IMR-90 (cell line): ENCODE measurements at regions of chr3 and their contacts with region 1.

Region 1: DNA sequence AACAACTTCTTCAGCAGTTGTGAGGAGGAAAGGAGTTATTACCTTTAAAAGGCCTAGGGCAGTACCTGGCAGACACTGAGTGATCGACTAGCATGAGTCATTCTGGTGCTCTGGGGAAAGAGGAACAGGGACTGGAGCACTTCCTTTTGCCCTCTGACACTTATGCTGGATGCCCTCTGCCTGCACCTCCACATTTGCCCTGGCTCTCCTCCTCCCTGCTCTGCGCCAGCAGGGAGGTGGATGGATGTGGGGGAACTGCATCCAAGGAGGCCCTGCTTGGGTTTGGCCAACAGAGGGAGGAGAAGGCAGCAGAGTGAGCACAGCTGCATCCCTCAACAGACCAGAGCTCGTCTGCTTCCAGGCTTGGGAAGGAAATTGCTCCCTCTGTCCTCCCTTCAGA is 75.1 kb downstream of the SEMA5B start:
- DNase-seq: no peak
- ATAC-seq: no peak
- H3K4me3 ChIP-seq: no peak overlapping the region
- H3K27ac ChIP-seq: no peak overlapping the region
- H3K4me1 ChIP-seq: peaks cover 1% of the 10 kb centered on the region; the same call in 1 of the 2 replicates
- H3K27me3 ChIP-seq: peaks cover 34% of the 10 kb centered on the region
- CTCF ChIP-seq: no peak
- POLR2A ChIP-seq: no peak
- RAD21 ChIP-seq: no peak

Region 2: DNA sequence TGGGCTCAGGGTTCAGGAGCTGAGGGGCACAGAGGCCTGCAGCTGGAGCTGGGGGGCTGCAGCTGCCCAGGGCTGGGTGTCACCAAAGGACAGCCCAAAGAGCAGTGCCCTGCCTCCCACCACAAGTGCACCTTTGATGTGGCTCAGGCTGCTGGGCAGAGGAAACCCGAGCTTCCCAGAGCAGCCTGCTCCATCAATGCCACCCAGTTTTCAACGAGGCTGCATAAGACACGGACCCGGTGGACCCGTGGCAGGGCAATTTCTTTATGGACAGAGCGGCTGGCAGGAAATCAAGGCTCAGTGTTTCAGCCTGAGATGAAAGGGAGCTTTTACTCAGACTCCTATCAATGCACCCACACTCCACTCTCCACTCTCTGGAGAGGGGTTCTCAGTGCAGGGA is 56.3 kb after region 1 on chr3:
- CTCF ChIA-PET with region 1: no interaction called
- POLR2A ChIA-PET with region 1: no interaction called
- dilution Hi-C with region 1: no loop called
- in situ Hi-C with region 1: no loop called
- intact Hi-C with region 1: loop called (anchors 5 kb)
- DNase-seq: no peak
- ATAC-seq: no peak
- H3K4me3 ChIP-seq: no peak overlapping the region
- H3K27ac ChIP-seq: no peak overlapping the region
- H3K4me1 ChIP-seq: no peaks in the 10 kb centered on the region
- H3K27me3 ChIP-seq: peaks cover 81% of the 10 kb centered on the region
- CTCF ChIP-seq: no peak
- POLR2A ChIP-seq: no peak
- RAD21 ChIP-seq: no peak